Panc1 (cell line): ENCODE measurements at regions of chr14 and their contacts with region 1.

Region 1: GRCh38 chr14:54610051-54610977 is 43.4 kb downstream of the SAMD4A start:
- DNase-seq: no peak
- ATAC-seq: no peak
- H3K4me3 ChIP-seq: no peak overlapping the region
- H3K27ac ChIP-seq: no peak overlapping the region
- H3K4me1 ChIP-seq: peaks cover 6% of the 10 kb centered on the region
- H3K27me3 ChIP-seq: no peaks in the 10 kb centered on the region
- CTCF ChIP-seq: no peak

Region 2: GRCh38 chr14:54691525-54692283 is 81.4 kb after region 1 on chr14:
- CTCF ChIA-PET with region 1: no interaction called
- POLR2A ChIA-PET with region 1: interaction called, 13 read pairs
- in situ Hi-C with region 1: no loop called
- intact Hi-C with region 1: no loop called
- DNase-seq: peak; percentile 59
- ATAC-seq: peak; percentile 93
- H3K4me3 ChIP-seq: no peak overlapping the region
- H3K27ac ChIP-seq: no peak overlapping the region
- H3K4me1 ChIP-seq: no peaks in the 10 kb centered on the region
- H3K27me3 ChIP-seq: no peaks in the 10 kb centered on the region
- CTCF ChIP-seq: peak; percentile 87